Posterior cingulate gyrus (tissue), 11 donors: ENCODE measurements at regions of chr2 and their contacts with region 1.

Region 1: GRCh38 chr2:149597668-149598326 is 10.2 kb upstream of the MMADHC start:
- DNase-seq: peak in 5 of 10 donors; percentile 8 to 80 (median 25)

Region 2: DNA sequence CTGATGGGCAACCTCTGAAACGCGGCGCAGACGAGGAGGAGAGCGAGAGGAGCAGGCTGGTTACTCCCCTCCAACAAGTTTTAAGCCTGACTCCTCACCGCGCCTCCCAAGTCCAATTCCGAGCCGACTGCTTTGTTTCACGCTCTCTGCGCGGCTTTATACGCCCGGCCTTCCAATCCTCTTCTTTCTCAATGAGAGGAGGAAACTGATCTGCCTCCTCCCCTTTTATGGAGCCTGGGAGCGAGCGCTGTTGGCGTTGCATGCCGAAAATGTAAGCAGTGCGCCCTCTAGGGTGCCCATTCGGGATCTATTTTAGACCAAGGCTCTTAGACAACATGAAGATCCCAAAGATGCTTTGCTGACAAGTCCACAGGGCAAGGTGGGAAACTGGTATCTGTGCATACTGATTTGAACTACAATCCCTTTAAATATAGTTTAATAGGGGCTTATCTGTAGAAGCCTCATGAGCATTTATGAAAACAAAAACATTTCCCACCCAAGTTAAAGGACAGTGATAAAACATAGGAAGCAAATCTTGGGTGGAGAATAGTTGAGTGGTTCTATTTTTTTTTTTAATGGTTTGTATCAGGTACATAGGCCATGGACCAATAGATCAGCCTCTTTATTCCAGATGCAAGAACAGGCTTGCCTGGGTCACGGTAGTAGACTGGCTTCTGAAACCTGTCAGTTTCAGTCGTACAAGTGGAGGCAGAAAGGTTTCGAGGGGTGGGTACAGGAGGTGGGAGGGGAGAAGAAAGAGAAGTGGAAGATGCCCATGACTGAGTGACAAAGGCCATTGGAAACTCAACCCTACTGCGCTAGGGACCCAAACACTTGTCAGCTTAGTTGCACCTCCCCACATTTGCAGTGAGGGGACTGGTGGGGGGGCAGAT is 890.0 kb after region 1 on chr2 and contains the start of gene RND3:
- intact Hi-C with region 1: loop called (anchors 5 kb)
- DNase-seq: peak; percentile 81 to 98 (median 94)

Region 3: GRCh38 chr2:151051574-151052220 is 1453.9 kb after region 1 on chr2:
- intact Hi-C with region 1: loop called (anchors 5 kb)
- DNase-seq: peak in 2 of 10 donors; percentile 13

Region 4: GRCh38 chr2:151238527-151239487 is 1641.0 kb after region 1 on chr2:
- intact Hi-C with region 1: loop called (anchors 2 kb)
- DNase-seq: peak in 7 of 10 donors; percentile 21 to 88 (median 44)